Activated CD4-positive, alpha-beta memory T cell treated with anti-CD3 and anti-CD28 coated beads for 36 hours (primary cell): ENCODE measurements at regions of chr10 and their contacts with region 1.

Region 1: DNA sequence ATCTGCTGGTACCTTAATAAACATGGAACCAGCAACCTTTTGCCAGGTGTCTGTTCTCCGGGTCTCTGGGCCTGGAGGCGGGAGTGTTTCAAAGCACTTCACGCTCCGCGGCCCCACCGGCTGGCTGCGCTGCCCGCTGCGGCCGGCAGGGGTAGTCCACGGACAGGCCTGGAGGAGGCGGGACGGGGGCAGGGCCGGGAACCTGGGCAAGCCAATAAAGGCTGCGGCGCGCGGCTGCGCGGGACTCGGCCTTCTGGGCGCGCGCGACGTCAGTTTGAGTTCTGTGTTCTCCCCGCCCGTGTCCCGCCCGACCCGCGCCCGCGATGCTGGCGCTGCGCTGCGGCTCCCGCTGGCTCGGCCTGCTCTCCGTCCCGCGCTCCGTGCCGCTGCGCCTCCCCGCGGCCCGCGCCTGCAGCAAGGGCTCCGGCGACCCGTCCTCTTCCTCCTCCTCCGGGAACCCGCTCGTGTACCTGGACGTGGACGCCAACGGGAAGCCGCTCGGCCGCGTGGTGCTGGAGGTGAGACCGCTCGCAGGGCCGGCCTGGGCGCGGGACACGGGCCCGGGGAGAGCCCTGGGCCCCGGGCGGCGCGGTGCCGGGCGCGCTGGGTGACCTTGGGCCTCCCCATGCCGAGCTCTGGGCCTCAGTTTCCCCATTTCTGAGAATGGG is at the start of gene PPIF:
- DNase-seq: peak; percentile 95
- H3K4me3 Mint-ChIP-seq: peak within 1 kb of the TSS; percentile 86
- H3K27ac Mint-ChIP-seq: peak within 1 kb of the TSS; percentile 92
- H3K4me1 Mint-ChIP-seq: peaks cover 26% of the 10 kb centered on the region
- H3K27me3 Mint-ChIP-seq: no peaks in the 10 kb centered on the region
- total RNA-seq, gene PPIF: 87.2 to 94.0 TPM

Region 2: GRCh38 chr10:79286318-79286951 is 60.9 kb before region 1 on chr10:
- CTCF ChIA-PET with region 1: interaction called, 4 read pairs
- POLR2A ChIA-PET with region 1: interaction called, 6 read pairs
- intact Hi-C with region 1: loop called (anchors 2 kb)
- DNase-seq: peak; percentile 93
- H3K4me3 Mint-ChIP-seq: peak overlapping the region; percentile 62
- H3K27ac Mint-ChIP-seq: peak overlapping the region; percentile 94
- H3K4me1 Mint-ChIP-seq: peaks cover 44% of the 10 kb centered on the region
- H3K27me3 Mint-ChIP-seq: no peaks in the 10 kb centered on the region

Region 3: DNA sequence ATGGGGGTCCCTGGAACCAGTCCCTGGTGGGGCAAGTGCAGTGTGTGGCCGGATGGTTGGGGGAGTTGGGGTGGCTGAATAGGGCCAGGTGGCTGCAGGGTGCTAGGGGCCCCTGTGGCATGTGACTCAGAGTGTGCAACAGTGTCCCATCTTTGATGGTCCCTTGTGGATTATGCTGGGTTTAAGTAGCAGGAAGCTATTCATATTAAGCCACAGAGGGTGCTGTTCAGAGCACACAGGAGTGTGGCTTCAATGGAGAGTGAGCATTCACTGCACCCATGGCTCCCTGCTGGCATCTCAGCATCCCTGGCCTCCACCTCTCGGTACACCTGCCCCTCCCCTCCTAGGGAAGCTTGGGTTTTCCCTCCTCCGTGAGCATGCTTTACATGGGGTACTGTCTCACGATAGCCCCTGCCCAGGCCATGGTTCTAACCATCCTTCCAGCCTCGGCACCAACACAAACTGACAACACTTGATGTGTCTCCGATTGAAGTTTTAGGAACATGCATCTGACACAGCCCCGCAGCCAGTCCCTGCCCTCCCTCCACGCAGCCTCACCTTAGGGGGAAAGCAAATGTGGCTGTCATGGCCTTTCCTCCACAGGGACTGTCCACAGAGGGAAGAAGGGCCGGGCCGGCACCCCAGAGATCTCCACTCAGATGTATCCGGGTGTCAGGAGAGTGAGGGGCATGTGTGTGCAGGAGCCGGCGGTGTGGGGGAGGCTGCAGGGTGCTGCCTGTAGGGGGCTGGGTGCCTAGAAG is 30.5 kb before region 1 on chr10:
- CTCF ChIA-PET with region 1: interaction called, 30 read pairs
- POLR2A ChIA-PET with region 1: interaction called, 23 read pairs
- intact Hi-C with region 1: loop called (anchors 1 kb)
- DNase-seq: peak; percentile 55
- H3K4me3 Mint-ChIP-seq: peak overlapping the region; percentile 53
- H3K27ac Mint-ChIP-seq: peak overlapping the region; percentile 80
- H3K4me1 Mint-ChIP-seq: peaks cover 62% of the 10 kb centered on the region
- H3K27me3 Mint-ChIP-seq: no peaks in the 10 kb centered on the region

Region 4: GRCh38 chr10:79331709-79332108 is 15.7 kb before region 1 on chr10:
- CTCF ChIA-PET with region 1: interaction called, 36 read pairs
- POLR2A ChIA-PET with region 1: interaction called, 12 read pairs
- intact Hi-C with region 1: loop called (anchors 1 kb)
- DNase-seq: peak; percentile 95
- H3K4me3 Mint-ChIP-seq: peak overlapping the region; percentile 6
- H3K27ac Mint-ChIP-seq: peak overlapping the region; percentile 89
- H3K4me1 Mint-ChIP-seq: peaks cover 41% of the 10 kb centered on the region
- H3K27me3 Mint-ChIP-seq: no peaks in the 10 kb centered on the region

Region 5: DNA sequence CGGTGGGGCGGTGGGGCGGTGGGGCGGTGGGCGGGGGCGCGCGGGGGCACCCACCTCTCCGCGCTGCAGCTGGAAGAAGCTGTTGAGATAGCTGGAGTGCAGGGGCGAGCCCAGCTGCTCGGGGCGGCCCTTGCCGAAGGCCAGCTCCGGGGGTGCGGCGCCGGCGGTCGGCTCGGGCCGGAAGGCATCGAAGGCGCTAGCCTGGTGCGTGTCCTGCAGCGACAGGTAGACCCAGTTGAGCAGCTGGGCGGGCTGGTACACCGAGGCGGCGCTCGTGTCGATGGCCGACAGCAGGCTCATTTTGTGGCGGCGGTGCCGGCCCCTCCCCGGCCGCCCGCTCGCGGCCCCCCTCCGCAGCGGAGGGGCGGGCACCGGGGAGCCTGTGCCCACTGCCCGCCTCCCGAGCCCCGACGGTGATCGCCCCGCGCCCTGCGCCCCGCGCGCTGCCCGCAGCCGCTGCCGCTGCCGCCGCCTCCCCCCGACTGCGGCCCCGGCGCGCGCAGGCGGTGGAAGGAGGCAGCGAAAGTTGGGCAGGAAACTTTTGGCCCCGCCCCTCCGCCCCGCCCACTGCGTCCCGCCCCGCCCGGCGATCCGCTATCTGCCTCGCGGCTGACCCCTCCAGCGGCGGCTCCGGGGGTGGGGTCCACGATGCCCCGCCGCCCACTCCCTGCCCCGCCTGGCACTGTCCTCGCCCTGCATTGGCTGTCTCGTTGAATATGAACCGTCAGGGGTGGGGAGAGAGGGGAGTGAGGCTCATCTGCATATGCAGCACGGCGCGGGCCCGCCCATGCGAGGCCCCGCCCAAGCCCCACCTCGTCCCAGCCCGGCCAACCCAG is 98.0 kb after region 1 on chr10 and contains the start of gene ZCCHC24:
- CTCF ChIA-PET with region 1: no interaction called
- POLR2A ChIA-PET with region 1: no interaction called
- intact Hi-C with region 1: loop called (anchors 1 kb)
- DNase-seq: peak; percentile 95
- H3K4me3 Mint-ChIP-seq: peak within 1 kb of the TSS; percentile 70
- H3K27ac Mint-ChIP-seq: peak within 1 kb of the TSS; percentile 26
- H3K4me1 Mint-ChIP-seq: peaks cover 18% of the 10 kb centered on the region
- H3K27me3 Mint-ChIP-seq: peaks cover 6% of the 10 kb centered on the region
- total RNA-seq, gene ZCCHC24: 0.77 to 1.00 TPM